Breast epithelium (tissue), 4 donors: ENCODE measurements at regions of chr11 and their contacts with region 1.

Region 1: DNA sequence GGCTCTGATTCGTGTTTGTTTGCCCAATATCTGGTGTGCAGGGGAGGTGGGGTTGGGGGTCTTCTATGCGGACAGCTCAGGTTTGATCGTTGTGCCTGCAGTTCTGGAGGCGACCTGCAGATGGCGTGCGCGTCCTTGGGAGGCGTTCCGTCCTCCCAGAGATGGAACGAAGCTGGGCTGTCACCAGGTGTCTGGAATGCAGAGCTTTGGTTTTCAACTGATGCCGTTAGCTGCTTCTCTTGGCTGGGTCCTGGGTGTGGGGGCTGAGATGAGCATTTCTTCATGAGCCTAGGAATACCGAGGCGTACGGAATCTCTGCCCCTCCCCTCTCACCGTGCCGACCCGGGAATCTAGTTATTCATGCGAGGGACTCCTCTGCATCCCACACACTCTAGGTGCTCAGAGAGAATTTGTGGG is 98.6 kb downstream of the CEP164 start:
- DNase-seq: peak; percentile 35 to 74
- H3K4me3 ChIP-seq: no peak overlapping the region
- H3K27ac ChIP-seq: no peak overlapping the region
- H3K4me1 ChIP-seq: no peaks in the 10 kb centered on the region
- H3K27me3 ChIP-seq: no peaks in the 10 kb centered on the region
- CTCF ChIP-seq: peak; percentile 89 to 93 (median 91)
- POLR2A ChIP-seq: no peak

Region 2: GRCh38 chr11:117807482-117808327 is 381.4 kb after region 1 on chr11:
- intact Hi-C with region 1: loop called (anchors 10 kb)
- DNase-seq: peak; percentile 66 to 75
- H3K4me3 ChIP-seq: no peak overlapping the region
- H3K27ac ChIP-seq: no peak overlapping the region
- H3K4me1 ChIP-seq: no peaks in the 10 kb centered on the region
- H3K27me3 ChIP-seq: peaks cover 0 to 4% of the 10 kb centered on the region in 2 donors
- CTCF ChIP-seq: peak; percentile 69 to 91 (median 75)
- POLR2A ChIP-seq: no peak